Endothelial cell of umbilical vein (primary cell): ENCODE measurements at regions of chr6 and their contacts with region 1.

Region 1: DNA sequence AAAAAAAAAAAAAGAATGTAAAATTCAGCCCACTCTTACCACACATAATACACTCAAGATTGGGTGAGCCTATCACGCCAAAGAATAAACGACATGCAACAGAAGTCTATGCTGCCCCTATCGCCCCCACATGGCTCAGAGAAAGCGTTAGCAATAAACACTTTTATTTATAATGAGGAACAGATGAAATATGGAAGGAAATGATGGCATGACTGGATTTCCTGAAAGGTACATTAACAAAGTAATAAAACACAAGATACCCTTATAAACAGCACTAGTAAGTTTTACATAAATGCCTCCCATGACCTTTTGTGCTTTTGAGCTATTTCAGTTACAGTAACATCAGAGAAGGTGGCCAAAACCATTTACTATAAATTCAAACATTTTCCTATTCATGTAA is 71.4 kb upstream of the SCAF8 start:
- DNase-seq: peak; percentile 92
- H3K4me3 ChIP-seq: no peak overlapping the region
- H3K27ac ChIP-seq: peak overlapping the region; percentile 61
- H3K4me1 ChIP-seq: peaks cover 17% of the 10 kb centered on the region
- H3K27me3 ChIP-seq: no peaks in the 10 kb centered on the region
- CTCF ChIP-seq: peak; percentile 31 to 42
- POLR2A ChIP-seq: peak; percentile 29

Region 2: GRCh38 chr6:154399097-154399496 is 262.7 kb before region 1 on chr6:
- CTCF ChIA-PET with region 1: no interaction called
- POLR2A ChIA-PET with region 1: no interaction called
- dilution Hi-C with region 1: no loop called
- intact Hi-C with region 1: loop called (anchors 5 kb)
- DNase-seq: peak; percentile 89
- H3K4me3 ChIP-seq: no peak overlapping the region
- H3K27ac ChIP-seq: peak overlapping the region; percentile 93
- H3K4me1 ChIP-seq: peaks cover 16% of the 10 kb centered on the region
- H3K27me3 ChIP-seq: no peaks in the 10 kb centered on the region
- CTCF ChIP-seq: no peak
- POLR2A ChIP-seq: no peak

Region 3: GRCh38 chr6:154410619-154411072 is 251.1 kb before region 1 on chr6:
- CTCF ChIA-PET with region 1: interaction called, 5 read pairs
- POLR2A ChIA-PET with region 1: no interaction called
- dilution Hi-C with region 1: no loop called
- intact Hi-C with region 1: loop called (anchors 1 kb)
- DNase-seq: peak; percentile 97
- H3K4me3 ChIP-seq: peak overlapping the region in 1 of 3 experiments; percentile 19
- H3K27ac ChIP-seq: peak overlapping the region; percentile 99
- H3K4me1 ChIP-seq: peaks cover 25% of the 10 kb centered on the region
- H3K27me3 ChIP-seq: no peaks in the 10 kb centered on the region
- CTCF ChIP-seq: no peak
- POLR2A ChIP-seq: no peak

Region 4: DNA sequence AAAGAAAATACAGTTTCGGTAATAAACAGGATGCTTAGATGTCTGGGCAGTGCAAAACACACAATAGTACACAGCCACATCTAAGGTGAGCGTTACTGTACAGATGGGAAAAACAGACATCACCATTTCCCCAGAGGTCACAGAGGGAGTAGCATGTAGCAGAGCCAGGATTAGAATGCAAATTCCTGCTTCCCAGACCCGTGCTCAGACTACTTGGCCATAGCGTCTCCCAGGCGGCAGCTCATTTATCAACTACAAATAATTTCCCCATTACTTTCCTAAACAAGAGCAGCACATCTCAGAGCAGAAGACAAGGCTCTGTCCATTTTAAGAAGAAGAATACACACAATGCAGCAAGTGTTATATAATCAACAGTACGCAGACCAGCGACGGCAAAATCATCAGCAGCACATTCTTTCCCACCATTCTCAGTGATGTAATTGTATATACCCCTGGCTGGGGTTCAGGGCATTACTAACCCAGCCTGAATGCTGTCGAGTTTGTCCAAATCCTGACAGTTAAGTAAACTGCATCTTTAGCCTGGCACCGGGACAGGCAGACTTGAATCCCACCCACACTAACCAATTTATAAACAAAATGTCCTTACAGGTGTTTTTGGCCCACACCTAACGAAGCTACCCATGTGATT is 213.2 kb before region 1 on chr6:
- CTCF ChIA-PET with region 1: interaction called, 4 read pairs
- POLR2A ChIA-PET with region 1: no interaction called
- dilution Hi-C with region 1: no loop called
- intact Hi-C with region 1: loop called (anchors 1 kb)
- DNase-seq: peak; percentile 77
- H3K4me3 ChIP-seq: no peak overlapping the region
- H3K27ac ChIP-seq: no peak overlapping the region
- H3K4me1 ChIP-seq: peaks cover 19% of the 10 kb centered on the region
- H3K27me3 ChIP-seq: no peaks in the 10 kb centered on the region
- CTCF ChIP-seq: peak in 1 of 2 donors; percentile 29
- POLR2A ChIP-seq: no peak

Region 5: DNA sequence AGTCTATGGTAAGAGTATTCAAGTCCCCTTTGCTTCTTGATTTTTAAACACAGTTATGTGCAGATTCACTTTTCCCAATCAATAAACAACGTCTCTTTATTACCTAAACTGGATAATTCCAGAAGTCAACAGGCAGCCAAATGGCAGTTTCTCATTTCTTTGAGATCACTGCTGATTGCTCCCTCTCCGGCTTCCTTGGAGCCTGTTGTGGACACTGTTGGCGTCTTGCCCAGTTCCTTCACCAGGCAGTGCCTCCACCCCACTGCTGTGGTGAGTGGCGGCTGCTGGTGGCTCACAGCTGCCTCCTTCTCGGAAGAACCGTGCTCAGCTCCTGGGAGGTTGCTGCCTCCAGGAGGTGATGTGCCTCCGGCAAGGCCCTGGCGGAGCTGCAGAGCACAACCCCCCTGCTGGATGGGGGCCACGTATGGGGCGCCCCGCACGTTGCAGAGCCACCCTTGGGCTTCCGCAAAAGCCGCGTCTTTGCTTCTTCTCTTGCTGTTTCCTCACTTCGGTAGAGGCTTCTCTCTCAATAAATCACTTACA is 46.2 kb before region 1 on chr6:
- CTCF ChIA-PET with region 1: interaction called, 5 read pairs
- POLR2A ChIA-PET with region 1: no interaction called
- dilution Hi-C with region 1: no loop called
- intact Hi-C with region 1: loop called (anchors 1 kb)
- DNase-seq: peak; percentile 27
- H3K4me3 ChIP-seq: no peak overlapping the region
- H3K27ac ChIP-seq: no peak overlapping the region
- H3K4me1 ChIP-seq: peaks cover 22% of the 10 kb centered on the region
- H3K27me3 ChIP-seq: no peaks in the 10 kb centered on the region
- CTCF ChIP-seq: no peak
- POLR2A ChIP-seq: no peak